Gastrocnemius medialis (tissue), 4 donors: ENCODE measurements at regions of chr19 and their contacts with region 1.

Region 1: GRCh38 chr19:39546599-39546998 is 6.6 kb upstream of the EID2 start:
- DNase-seq: no peak
- ATAC-seq: no peak
- H3K4me3 ChIP-seq: no peak overlapping the region
- H3K27ac ChIP-seq: no peak overlapping the region
- H3K4me1 ChIP-seq: no peaks in the 10 kb centered on the region
- H3K27me3 ChIP-seq: no peaks in the 10 kb centered on the region
- CTCF ChIP-seq: no peak
- POLR2A ChIP-seq: no peak

Region 2: DNA sequence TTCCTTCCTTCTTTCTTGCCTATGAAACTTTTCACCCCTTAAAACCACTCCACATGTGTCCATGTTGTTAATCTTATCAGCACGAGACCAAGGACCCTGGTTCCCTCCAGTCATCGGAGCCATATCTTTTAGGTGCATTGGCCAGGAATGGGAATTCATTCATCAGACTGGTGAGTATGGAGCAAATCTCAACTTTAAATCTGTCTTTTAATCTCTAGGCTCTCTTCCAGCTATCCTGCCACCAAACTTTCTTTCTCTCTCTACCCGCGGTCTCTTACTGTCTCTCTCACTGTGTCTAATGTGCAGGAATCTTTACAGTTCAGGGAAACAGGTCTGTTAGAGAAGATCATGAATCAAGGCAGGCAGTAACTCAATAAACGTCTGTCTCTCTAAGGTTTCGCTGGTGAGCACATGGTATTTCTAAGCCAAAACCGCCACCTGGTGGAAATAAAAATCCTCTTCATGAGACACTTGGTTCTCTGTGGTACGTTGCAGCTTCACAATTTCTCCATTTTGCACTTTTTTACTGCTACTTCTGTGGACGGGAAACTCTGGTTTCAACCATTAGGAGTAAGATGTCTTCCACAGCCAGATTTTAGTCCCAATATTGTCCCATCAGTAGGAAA is 125.3 kb after region 1 on chr19:
- in situ Hi-C with region 1: loop called in 1 of 4 experiments (anchors 10 kb)
- intact Hi-C with region 1: loop called (anchors 1 kb)
- DNase-seq: no peak
- ATAC-seq: peak; percentile 69 to 72
- H3K4me3 ChIP-seq: no peak overlapping the region
- H3K27ac ChIP-seq: no peak overlapping the region
- H3K4me1 ChIP-seq: no peaks in the 10 kb centered on the region
- H3K27me3 ChIP-seq: peaks cover 0 to under 1% (median 0%) of the 10 kb centered on the region in 3 donors
- CTCF ChIP-seq: peak; percentile 54 to 65 (median 62)
- POLR2A ChIP-seq: no peak

Region 3: DNA sequence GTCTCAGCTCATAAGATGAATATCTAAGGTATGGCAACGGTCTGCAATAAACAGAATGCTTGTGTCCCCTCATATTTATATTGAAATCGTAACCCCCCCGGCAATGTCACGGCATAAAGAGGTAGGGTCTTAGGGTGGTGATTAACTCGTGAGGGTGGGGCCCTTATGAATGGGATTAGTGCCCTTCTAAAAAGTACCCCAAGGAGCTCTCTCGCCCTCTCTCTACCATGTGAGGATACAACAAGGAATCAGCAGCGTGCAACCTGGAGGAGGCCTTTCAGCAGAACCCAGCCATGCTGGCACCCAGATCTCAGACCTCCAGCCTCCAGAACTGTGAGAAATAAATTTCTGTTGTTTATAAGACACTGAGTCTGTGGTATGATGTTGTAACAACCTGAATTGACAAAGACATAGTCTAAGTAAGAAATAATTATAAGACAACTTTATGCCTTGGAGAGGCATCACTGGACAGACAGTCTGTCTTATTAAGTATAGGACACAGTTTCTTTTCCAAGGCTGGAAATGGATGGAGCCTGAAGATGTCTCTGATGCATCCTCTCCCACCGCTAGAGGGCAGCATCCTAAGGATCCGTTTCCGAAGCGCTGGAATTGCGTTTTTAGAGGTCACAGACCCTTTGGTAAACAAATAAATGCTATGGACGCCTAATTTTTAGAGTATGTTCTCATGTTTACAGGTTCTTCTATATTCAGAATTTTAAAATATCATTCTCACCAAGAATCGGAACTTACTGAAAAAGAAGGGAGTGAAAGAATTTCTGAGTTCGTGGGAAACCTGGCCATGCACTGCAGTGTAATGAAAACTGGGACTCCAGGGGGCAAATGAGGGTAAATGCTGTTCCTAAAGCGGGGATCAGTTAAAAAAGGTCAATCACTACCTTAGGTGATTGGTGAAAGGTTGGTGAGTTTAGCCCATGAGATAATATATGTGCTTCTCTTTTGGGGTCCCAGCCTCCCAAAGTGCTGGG is 218.8 kb after region 1 on chr19:
- in situ Hi-C with region 1: no loop called
- intact Hi-C with region 1: loop called (anchors 2 kb)
- DNase-seq: peak in 1 of 2 donors; percentile 18
- ATAC-seq: no peak
- H3K4me3 ChIP-seq: no peak overlapping the region
- H3K27ac ChIP-seq: no peak overlapping the region
- H3K4me1 ChIP-seq: peaks cover 0 to 2% of the 10 kb centered on the region in 2 donors
- H3K27me3 ChIP-seq: no peaks in the 10 kb centered on the region
- CTCF ChIP-seq: peak; percentile 34 to 70 (median 49)
- POLR2A ChIP-seq: no peak